H1 (cell line): ENCODE measurements at regions of chr17 and their contacts with region 1.

Region 1: DNA sequence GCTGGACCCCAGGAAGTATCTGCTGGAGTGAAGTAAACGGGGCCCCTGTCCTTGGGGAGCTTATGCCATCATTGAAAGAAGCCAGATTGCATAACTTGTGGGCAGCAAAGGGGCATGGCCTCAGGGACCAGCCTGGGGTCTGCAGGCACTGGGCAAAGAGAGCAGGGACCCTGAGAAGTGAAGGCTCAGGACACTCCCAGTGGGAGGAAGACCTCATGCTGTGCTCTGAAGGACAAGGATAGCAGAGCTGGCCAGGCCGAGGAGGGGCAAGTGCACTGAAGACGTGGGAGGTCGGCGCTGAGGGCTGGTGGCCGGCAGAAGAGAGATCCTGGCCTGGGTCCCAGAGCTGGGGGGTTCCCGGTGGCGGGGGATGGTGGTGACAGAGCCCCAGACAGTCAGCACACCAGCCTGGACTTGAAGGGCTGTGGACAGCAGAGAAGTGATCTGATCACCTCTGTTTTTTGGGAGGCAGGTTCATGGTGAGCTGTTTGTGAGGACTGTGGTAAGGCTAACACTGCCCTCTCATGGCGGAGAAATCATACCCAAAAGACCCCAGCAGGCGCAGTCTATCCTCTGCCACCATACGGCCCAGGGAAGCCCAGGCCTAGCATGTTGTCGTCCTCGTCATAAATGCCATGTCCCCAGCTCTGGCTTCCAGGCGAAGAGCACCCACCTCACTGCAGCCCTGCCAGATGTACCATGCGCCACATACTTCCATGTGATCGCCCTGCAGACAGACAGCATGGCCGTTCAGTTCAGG is 7.1 kb upstream of the CNP start:
- DNase-seq: peak in 1 of 2 experiments; percentile 68
- H3K4me3 ChIP-seq: 0 out of 8 replicates have a peak overlapping the region, but pooled peaks of 1 of the 4 experiments have one; percentile 7
- H3K27ac ChIP-seq: peak overlapping the region; percentile 13; the same call in 1 of the 2 replicates
- H3K4me1 ChIP-seq: peaks cover 6 to 16% (median 11%) of the 10 kb centered on the region in 4 experiments
- H3K27me3 ChIP-seq: no peaks in the 10 kb centered on the region
- CTCF ChIP-seq: peak; percentile 66 to 87 (median 86)
- EP300 ChIP-seq: no peak
- POLR2A ChIP-seq: no peak
- RAD21 ChIP-seq: peak; percentile 78 to 85

Region 2: DNA sequence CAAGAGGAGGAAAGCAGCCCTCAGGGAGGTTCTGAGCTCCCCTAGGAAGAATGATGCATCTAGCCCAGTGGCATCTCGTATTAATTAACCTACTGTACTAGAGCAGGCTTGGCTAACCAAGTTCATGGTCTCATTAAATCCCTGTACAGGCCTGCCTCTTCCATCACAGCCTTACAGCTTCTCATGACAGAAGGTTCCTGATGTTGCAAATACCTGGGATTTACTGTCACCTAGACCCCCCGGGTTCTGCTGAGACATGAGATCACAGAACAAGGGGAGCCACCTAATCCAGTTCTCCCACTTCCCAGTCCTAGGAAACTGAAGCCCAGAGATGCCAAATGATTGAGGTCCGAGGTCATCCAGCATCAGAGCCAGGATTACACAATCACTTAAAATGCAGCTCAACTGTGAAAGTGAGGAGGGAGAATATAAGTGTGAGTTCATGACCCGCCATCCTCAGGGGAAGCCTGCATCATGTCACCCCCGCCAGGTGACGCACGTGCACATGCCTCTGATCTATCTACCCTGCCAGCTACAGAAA is 64.7 kb before region 1 on chr17:
- CTCF ChIA-PET with region 1: interaction called, 13 read pairs
- POLR2A ChIA-PET with region 1: no interaction called
- DNase-seq: no peak
- H3K4me3 ChIP-seq: no peak overlapping the region
- H3K27ac ChIP-seq: no peak overlapping the region
- H3K4me1 ChIP-seq: no peaks in the 10 kb centered on the region
- H3K27me3 ChIP-seq: no peaks in the 10 kb centered on the region
- CTCF ChIP-seq: no peak
- EP300 ChIP-seq: no peak
- POLR2A ChIP-seq: no peak
- RAD21 ChIP-seq: no peak

Region 3: GRCh38 chr17:41918314-41919164 is 41.0 kb before region 1 on chr17 and contains the start of gene ACLY:
- CTCF ChIA-PET with region 1: interaction called, 205 read pairs
- POLR2A ChIA-PET with region 1: interaction called, 67 read pairs
- DNase-seq: peak; percentile 94 to 98
- H3K4me3 ChIP-seq: peak within 1 kb of the TSS; percentile 74 to 99 (median 93)
- H3K27ac ChIP-seq: peak within 1 kb of the TSS; percentile 85
- H3K4me1 ChIP-seq: peaks cover 13 to 31% (median 24%) of the 10 kb centered on the region in 4 experiments
- H3K27me3 ChIP-seq: no peaks in the 10 kb centered on the region
- CTCF ChIP-seq: 0 out of 4 replicates have a peak, but pooled peaks of 1 of the 3 experiments have one; percentile 5
- EP300 ChIP-seq: no peak; a peak in 1 of 3 replicates
- POLR2A ChIP-seq: peak; percentile 30 to 95
- RAD21 ChIP-seq: no peak
- total RNA-seq, gene ACLY: 388 and 393 TPM in 2 replicates

Region 4: GRCh38 chr17:41937970-41938954 is 21.3 kb before region 1 on chr17:
- CTCF ChIA-PET with region 1: interaction called, 15 read pairs
- POLR2A ChIA-PET with region 1: interaction called, 8 read pairs
- DNase-seq: no peak
- H3K4me3 ChIP-seq: no peak overlapping the region
- H3K27ac ChIP-seq: no peak overlapping the region
- H3K4me1 ChIP-seq: no peaks in the 10 kb centered on the region
- H3K27me3 ChIP-seq: no peaks in the 10 kb centered on the region
- CTCF ChIP-seq: no peak
- EP300 ChIP-seq: no peak
- POLR2A ChIP-seq: no peak
- RAD21 ChIP-seq: no peak

Region 5: DNA sequence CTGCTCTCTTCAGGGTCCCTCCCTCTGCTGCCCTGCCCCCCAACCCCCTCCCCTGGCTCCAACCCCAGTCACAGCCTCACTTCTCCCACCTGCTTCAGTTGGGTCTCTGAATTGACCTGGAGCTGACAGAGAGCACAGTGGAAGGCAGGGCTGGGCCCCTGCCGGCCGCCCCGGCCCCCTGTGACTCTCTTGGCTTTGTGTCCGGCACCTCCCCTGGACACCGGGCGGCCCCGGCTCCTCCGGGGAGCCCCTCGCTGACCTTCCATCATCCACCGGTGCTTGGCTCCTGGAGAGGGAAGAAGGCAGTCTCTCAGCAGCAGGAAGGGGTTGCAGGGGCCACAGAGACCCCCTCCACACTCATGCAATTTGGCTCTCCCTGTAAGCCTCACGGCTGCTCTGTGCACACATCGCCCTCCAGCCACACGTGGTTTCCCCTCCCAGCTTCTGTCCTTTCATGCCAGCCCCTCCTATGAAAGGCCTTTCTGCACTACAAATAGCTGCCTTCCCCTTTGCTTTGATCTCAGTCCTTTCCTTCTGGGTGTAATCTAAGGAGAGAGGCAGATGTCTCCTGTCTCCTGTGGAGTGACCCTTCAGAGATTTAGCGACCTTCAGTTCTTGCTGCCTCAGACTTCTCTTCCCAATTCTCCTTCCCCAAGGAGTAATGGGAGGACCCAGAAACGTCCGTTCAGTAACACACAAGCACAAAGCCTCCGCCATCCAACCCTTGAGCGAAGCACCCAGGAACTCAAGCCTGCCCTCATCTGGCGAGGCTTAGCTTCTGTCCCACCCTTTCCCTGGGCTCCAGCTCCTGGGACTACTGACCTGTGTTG is 68.7 kb after region 1 on chr17:
- CTCF ChIA-PET with region 1: interaction called, 12 read pairs
- POLR2A ChIA-PET with region 1: interaction called, 4 read pairs
- DNase-seq: peak in 1 of 2 experiments; percentile 77
- H3K4me3 ChIP-seq: no peak overlapping the region
- H3K27ac ChIP-seq: no peak overlapping the region
- H3K4me1 ChIP-seq: peaks cover 0 to 12% (median 5%) of the 10 kb centered on the region in 4 experiments; a peak in 4 of 7 replicates
- H3K27me3 ChIP-seq: no peaks in the 10 kb centered on the region
- CTCF ChIP-seq: peak; percentile 65 to 91 (median 80)
- EP300 ChIP-seq: no peak
- POLR2A ChIP-seq: no peak
- RAD21 ChIP-seq: peak; percentile 35 to 58